ENCODE measurements at regions of chr1 and their contacts with region 1.

Region 1: GRCh38 chr1:160006312-160006940 is 25.4 kb downstream of the PIGM start:
- DNase-seq: no peak
- ATAC-seq: peak; percentile 98
- H3K4me3 ChIP-seq: no peak overlapping the region
- H3K27ac ChIP-seq: no peak overlapping the region
- H3K4me1 ChIP-seq: no peaks in the 10 kb centered on the region
- H3K27me3 ChIP-seq: no peaks in the 10 kb centered on the region; a peak in 1 of 4 replicates
- CTCF ChIP-seq: peak; percentile 84 to 94 (median 94)
- EP300 ChIP-seq: no peak
- POLR2A ChIP-seq: no peak
- RAD21 ChIP-seq: peak; percentile 70

Region 2: GRCh38 chr1:159132271-159132881 is 874.0 kb before region 1 on chr1:
- CTCF ChIA-PET with region 1: interaction called, 8 read pairs
- POLR2A ChIA-PET with region 1: no interaction called
- RAD21 ChIA-PET with region 1: interaction called, 10 read pairs
- SMC1A ChIA-PET with region 1: interaction called, 3 read pairs
- in situ Hi-C with region 1: no loop called
- intact Hi-C with region 1: no loop called
- DNase-seq: no peak
- ATAC-seq: peak; percentile 75
- H3K4me3 ChIP-seq: no peak overlapping the region
- H3K27ac ChIP-seq: no peak overlapping the region
- H3K4me1 ChIP-seq: no peaks in the 10 kb centered on the region
- H3K27me3 ChIP-seq: no peaks in the 10 kb centered on the region
- CTCF ChIP-seq: peak; percentile 79 to 90 (median 87)
- EP300 ChIP-seq: no peak
- POLR2A ChIP-seq: no peak
- RAD21 ChIP-seq: peak; percentile 82

Region 3: DNA sequence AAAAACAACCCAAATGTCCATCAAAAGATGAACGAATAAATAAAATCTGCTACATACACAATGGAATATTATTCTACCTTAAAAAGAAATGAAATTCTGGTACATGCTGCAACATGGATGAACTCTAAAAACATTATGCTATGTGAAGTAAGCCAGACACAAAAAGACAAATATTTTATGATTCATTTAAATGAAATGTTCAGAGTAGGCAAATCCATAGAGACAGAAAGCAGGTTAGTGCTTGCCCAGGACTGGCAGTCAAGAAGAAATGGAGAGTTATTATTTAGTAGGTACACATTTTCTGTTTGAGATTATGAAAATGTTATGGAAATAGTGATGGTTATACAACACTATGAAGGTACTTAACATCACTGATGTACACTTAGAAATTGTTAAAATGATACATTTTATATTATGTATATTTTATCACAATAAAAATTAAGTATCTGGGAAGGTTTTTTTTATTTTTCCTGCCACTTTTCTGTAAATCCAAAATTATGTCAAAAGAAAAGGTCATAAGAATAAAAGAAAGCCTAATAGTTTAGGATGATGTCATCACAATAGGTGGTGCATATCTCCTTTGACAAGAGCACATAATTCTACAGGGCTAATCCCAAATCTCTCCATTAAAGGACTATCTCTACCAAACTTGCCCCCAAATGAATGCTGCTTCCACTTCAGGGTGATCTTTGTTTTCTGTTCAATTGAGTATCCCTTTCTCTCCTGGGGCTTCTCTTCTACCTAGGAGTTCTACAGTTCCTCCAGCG is 744.5 kb before region 1 on chr1:
- CTCF ChIA-PET with region 1: no interaction called
- POLR2A ChIA-PET with region 1: no interaction called
- RAD21 ChIA-PET with region 1: no interaction called
- SMC1A ChIA-PET with region 1: no interaction called
- in situ Hi-C with region 1: no loop called
- intact Hi-C with region 1: no loop called
- DNase-seq: no peak
- ATAC-seq: no peak
- H3K4me3 ChIP-seq: no peak overlapping the region
- H3K27ac ChIP-seq: no peak overlapping the region
- H3K4me1 ChIP-seq: no peaks in the 10 kb centered on the region
- H3K27me3 ChIP-seq: no peaks in the 10 kb centered on the region
- CTCF ChIP-seq: no peak
- EP300 ChIP-seq: no peak
- POLR2A ChIP-seq: no peak
- RAD21 ChIP-seq: no peak

Region 4: DNA sequence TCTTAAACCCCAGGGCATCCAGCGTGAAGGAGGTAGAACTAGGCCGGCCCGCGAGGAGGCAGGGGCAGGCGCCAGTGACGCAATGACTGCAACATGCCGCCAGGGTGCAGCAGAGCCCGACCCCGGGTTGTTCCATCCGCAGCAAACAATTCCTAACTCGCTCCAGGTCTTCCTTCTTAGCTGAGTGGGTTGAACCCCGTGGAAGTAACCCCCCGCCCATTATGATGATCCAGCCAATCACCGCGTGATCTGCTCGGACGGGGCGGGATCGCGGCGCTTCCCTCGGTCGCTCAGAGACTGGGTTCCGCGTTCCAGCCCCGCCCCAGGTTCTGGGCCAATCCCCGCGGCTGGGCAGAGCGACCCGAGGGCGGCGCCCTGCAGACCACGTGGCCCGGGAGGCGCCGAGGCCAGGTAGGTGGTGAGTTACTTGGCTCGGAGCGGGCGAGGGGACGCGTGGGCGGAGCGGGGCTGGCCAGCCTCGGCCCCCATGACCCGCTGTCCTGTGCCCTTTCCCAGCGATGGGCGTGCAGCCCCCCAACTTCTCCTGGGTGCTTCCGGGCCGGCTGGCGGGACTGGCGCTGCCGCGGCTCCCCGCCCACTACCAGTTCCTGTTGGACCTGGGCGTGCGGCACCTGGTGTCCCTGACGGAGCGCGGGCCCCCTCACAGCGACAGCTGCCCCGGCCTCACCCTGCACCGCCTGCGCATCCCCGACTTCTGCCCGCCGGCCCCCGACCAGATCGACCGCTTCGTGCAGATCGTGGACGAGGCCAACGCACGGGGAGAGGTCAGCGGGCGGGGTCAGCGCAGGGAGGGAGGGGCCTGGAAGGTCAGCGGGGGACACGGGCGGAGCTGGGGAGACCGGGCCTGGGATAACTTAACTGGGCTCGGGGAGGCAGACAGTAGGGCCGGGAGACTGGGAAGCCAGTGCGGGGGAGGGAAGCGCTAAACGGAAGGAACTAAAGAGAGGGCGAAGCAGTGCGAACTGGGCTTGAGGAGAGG is 225.5 kb before region 1 on chr1 and contains the start of gene DUSP23:
- CTCF ChIA-PET with region 1: interaction called, 6 read pairs
- POLR2A ChIA-PET with region 1: no interaction called
- RAD21 ChIA-PET with region 1: no interaction called
- SMC1A ChIA-PET with region 1: interaction called, 6 read pairs
- in situ Hi-C with region 1: no loop called
- intact Hi-C with region 1: loop called (anchors 2 kb)
- DNase-seq: peak; percentile 81
- ATAC-seq: peak; percentile 100
- H3K4me3 ChIP-seq: peak within 1 kb of the TSS; percentile 29
- H3K27ac ChIP-seq: no peak within 1 kb of the TSS
- H3K4me1 ChIP-seq: no peaks in the 10 kb centered on the region
- H3K27me3 ChIP-seq: no peaks in the 10 kb centered on the region
- CTCF ChIP-seq: peak; percentile 78 to 81 (median 81)
- EP300 ChIP-seq: no peak
- POLR2A ChIP-seq: peak; percentile 76
- RAD21 ChIP-seq: peak; percentile 44; the same call in 1 of the 2 replicates
- polyA plus RNA-seq, gene DUSP23: 1.1 TPM in 1 of 2 experiments, not detected in the other

Region 5: DNA sequence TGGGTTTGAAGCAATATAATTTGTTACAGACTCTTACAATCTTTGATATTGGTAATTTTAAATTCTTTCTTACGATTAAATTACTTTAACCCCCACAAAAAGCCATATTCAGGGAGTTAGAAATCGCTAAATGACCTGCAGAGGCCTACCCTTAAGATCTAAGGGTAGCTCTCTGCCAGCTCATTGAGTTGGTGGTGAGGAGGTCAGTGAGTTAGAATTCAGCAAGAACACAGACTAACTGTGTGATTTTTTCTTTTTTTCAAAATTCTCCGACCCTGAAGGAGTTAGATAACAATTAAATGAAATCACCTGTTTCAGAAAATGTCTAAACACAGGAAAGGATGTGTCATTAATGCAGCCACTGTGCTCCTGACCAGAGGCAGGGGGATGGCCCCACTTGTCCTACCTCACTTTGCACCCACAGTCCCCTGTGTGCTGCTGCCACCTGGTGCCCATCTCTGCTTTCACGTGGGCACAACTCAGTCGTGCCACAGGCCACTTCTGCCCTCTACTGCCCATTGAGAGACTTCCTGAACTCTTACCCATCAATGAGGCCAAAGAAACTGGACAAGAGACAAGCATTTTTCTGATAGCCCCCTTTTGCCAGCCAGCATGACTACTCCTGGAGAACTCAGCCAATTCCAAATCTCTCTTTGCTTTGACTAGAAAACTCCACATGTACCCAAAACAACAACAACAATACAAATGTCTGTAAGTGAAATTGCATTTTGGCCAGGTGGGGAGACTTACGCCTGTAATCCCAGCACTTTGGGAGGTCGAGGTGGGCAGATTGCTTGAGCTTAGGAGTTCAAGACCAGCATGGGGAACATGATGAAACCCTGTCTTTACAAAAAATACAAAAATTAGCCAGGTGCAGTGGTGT is 114.9 kb before region 1 on chr1:
- CTCF ChIA-PET with region 1: interaction called, 254 read pairs
- POLR2A ChIA-PET with region 1: no interaction called
- RAD21 ChIA-PET with region 1: interaction called, 88 read pairs
- SMC1A ChIA-PET with region 1: interaction called, 89 read pairs
- in situ Hi-C with region 1: no loop called
- intact Hi-C with region 1: loop called (anchors 1 kb)
- DNase-seq: peak; percentile 83
- ATAC-seq: peak; percentile 89
- H3K4me3 ChIP-seq: no peak overlapping the region
- H3K27ac ChIP-seq: no peak overlapping the region
- H3K4me1 ChIP-seq: peaks cover 19% of the 10 kb centered on the region
- H3K27me3 ChIP-seq: 0 out of 4 replicates have a peak, but pooled peaks cover 0 to 2% of the 10 kb centered on the region in 2 experiments
- CTCF ChIP-seq: peak; percentile 97 to 100 (median 99); a peak in 5 of 6 replicates
- EP300 ChIP-seq: no peak
- POLR2A ChIP-seq: no peak
- RAD21 ChIP-seq: peak; percentile 99

Region 6: GRCh38 chr1:159953536-159954515 is 52.6 kb before region 1 on chr1 and contains the start of gene SLAMF9:
- CTCF ChIA-PET with region 1: interaction called, 22 read pairs
- POLR2A ChIA-PET with region 1: no interaction called
- RAD21 ChIA-PET with region 1: interaction called, 4 read pairs
- SMC1A ChIA-PET with region 1: interaction called, 13 read pairs
- in situ Hi-C with region 1: no loop called
- intact Hi-C with region 1: no loop called
- DNase-seq: no peak
- ATAC-seq: no peak
- H3K4me3 ChIP-seq: no peak within 1 kb of the TSS
- H3K27ac ChIP-seq: no peak within 1 kb of the TSS
- H3K4me1 ChIP-seq: peaks cover 5% of the 10 kb centered on the region
- H3K27me3 ChIP-seq: peaks cover 0 to 4% of the 10 kb centered on the region in 2 experiments; a peak in 2 of 4 replicates
- CTCF ChIP-seq: no peak
- EP300 ChIP-seq: no peak
- POLR2A ChIP-seq: no peak
- RAD21 ChIP-seq: no peak
- polyA plus RNA-seq, gene SLAMF9: not detected

Region 7: GRCh38 chr1:160031365-160032164 is 25.1 kb after region 1 on chr1 and contains the start of gene PIGM:
- CTCF ChIA-PET with region 1: interaction called, 38 read pairs
- POLR2A ChIA-PET with region 1: no interaction called
- RAD21 ChIA-PET with region 1: interaction called, 16 read pairs
- SMC1A ChIA-PET with region 1: interaction called, 17 read pairs
- in situ Hi-C with region 1: no loop called
- intact Hi-C with region 1: no loop called
- DNase-seq: peak; percentile 66
- ATAC-seq: peak; percentile 97
- H3K4me3 ChIP-seq: peak within 1 kb of the TSS; percentile 97
- H3K27ac ChIP-seq: peak within 1 kb of the TSS; percentile 48
- H3K4me1 ChIP-seq: peaks cover 5% of the 10 kb centered on the region; the same call in 1 of the 2 replicates
- H3K27me3 ChIP-seq: no peaks in the 10 kb centered on the region
- CTCF ChIP-seq: no peak
- EP300 ChIP-seq: no peak
- POLR2A ChIP-seq: peak; percentile 79
- RAD21 ChIP-seq: no peak
- polyA plus RNA-seq, gene PIGM: 2.6 to 3.7 TPM

Region 8: DNA sequence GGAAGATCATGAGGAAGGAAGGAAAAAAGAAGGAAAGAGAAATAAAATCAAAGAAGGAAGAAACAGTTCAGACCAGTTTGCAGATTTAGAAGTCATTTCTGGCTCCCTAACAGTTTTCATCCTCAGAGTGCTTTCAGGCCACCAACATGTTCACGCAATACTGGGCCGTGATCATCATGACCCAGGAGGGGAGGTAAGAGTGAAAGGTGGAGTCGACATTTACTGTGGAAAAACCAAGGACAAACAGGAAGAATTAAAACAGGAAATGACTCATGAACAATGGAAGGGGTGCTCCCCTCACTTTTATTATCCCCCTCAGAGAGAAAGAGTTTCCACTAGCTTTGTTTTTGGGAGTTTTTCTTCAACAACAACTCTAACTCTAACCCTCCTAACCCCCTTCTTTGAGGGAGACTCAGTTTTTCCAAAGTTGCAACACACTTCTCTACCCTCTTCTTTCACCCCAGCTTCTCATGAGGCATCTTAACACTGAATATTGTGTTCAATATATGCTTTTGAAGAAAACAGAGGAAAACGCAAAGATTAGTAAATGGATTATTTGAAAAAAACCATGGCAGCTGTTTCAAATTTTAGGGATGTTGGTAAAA is 454.4 kb after region 1 on chr1:
- CTCF ChIA-PET with region 1: no interaction called
- POLR2A ChIA-PET with region 1: no interaction called
- RAD21 ChIA-PET with region 1: no interaction called
- SMC1A ChIA-PET with region 1: no interaction called
- in situ Hi-C with region 1: no loop called
- intact Hi-C with region 1: no loop called
- DNase-seq: no peak
- ATAC-seq: peak; percentile 41
- H3K4me3 ChIP-seq: 0 out of 2 replicates have a peak overlapping the region, but pooled peaks have one; percentile 7
- H3K27ac ChIP-seq: peak overlapping the region; percentile 89
- H3K4me1 ChIP-seq: peaks cover 41% of the 10 kb centered on the region
- H3K27me3 ChIP-seq: no peaks in the 10 kb centered on the region
- CTCF ChIP-seq: no peak
- EP300 ChIP-seq: no peak
- POLR2A ChIP-seq: no peak
- RAD21 ChIP-seq: no peak

Measured in GM12878 (cell line).